WTC11 (cell line): ENCODE measurements at regions of chr12 and their contacts with region 1.

Region 1: GRCh38 chr12:54259194-54260011 is 20.5 kb downstream of the CBX5 start:
- DNase-seq: peak; percentile 91
- ATAC-seq: peak; percentile 94
- H3K4me3 Mint-ChIP-seq: peak overlapping the region; percentile 66
- H3K27ac Mint-ChIP-seq: peak overlapping the region; percentile 99
- H3K4me1 Mint-ChIP-seq: peaks cover 63% of the 10 kb centered on the region
- H3K27me3 Mint-ChIP-seq: no peaks in the 10 kb centered on the region
- CTCF ChIP-seq: no peak

Region 2: GRCh38 chr12:54195080-54195736 is 64.2 kb before region 1 on chr12:
- CTCF ChIA-PET with region 1: no interaction called
- POLR2A ChIA-PET with region 1: no interaction called
- DNase-seq: no peak
- ATAC-seq: no peak
- H3K4me3 Mint-ChIP-seq: no peak overlapping the region
- H3K27ac Mint-ChIP-seq: no peak overlapping the region
- H3K4me1 Mint-ChIP-seq: peaks cover 24% of the 10 kb centered on the region
- H3K27me3 Mint-ChIP-seq: peaks cover 98% of the 10 kb centered on the region
- CTCF ChIP-seq: no peak

Region 3: GRCh38 chr12:54279866-54280467 is 20.6 kb after region 1 on chr12 and contains the start of gene CBX5:
- CTCF ChIA-PET with region 1: interaction called, 19 read pairs
- POLR2A ChIA-PET with region 1: interaction called, 105 read pairs
- DNase-seq: peak; percentile 99
- ATAC-seq: peak; percentile 53
- H3K4me3 Mint-ChIP-seq: no peak within 1 kb of the TSS
- H3K27ac Mint-ChIP-seq: no peak within 1 kb of the TSS
- H3K4me1 Mint-ChIP-seq: peaks cover 58% of the 10 kb centered on the region
- H3K27me3 Mint-ChIP-seq: no peaks in the 10 kb centered on the region
- CTCF ChIP-seq: no peak
- total RNA-seq, gene CBX5: 182 to 218 TPM (median 216 TPM) in 3 replicates

Region 4: GRCh38 chr12:54285150-54286041 is 26.0 kb after region 1 on chr12:
- CTCF ChIA-PET with region 1: interaction called, 19 read pairs
- POLR2A ChIA-PET with region 1: interaction called, 105 read pairs
- DNase-seq: no peak
- ATAC-seq: no peak
- H3K4me3 Mint-ChIP-seq: peak overlapping the region; percentile 10
- H3K27ac Mint-ChIP-seq: peak overlapping the region; percentile 81
- H3K4me1 Mint-ChIP-seq: peaks cover 41% of the 10 kb centered on the region
- H3K27me3 Mint-ChIP-seq: no peaks in the 10 kb centered on the region
- CTCF ChIP-seq: no peak

Region 5: DNA sequence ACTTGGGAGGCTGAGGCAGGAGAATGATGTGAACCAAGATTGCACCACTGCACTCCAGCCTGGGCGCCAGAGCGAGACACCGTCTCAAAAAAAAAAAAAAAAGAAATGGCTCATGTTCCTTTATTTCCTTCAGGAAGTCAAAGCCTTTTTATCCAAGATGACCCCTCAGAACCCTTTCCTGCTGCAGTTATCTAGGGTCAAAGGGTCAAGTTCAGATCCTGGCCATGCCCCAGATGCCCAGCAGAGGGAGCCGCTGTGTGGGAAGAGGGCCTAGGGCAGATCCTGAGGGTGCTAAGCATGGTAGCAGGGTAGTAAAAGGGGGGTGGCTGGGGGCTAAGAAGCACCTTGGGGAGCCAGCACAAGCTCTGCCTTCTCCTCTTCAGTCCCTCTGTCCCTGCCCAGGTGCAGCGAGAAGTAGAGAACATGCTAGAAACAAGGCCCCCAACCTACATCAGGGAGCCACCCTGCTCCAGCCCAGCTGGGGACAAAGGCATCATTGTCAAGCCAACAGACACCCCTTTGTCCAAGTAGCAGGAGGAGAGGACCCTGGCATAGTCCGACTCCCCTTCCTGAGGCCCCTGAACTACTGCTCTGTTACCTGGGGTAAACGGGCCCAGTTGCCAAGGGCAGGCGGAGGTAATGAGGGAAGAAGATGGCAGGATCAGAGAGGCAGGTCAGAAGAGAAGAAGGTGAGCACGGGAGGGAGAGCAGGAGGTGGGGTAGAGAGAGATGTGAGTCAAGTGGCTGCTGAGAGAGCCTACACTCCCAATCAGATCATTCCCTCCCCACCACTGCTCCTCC is 34.9 kb after region 1 on chr12:
- CTCF ChIA-PET with region 1: interaction called, 5 read pairs
- POLR2A ChIA-PET with region 1: interaction called, 12 read pairs
- DNase-seq: peak; percentile 88
- ATAC-seq: peak; percentile 76
- H3K4me3 Mint-ChIP-seq: no peak overlapping the region
- H3K27ac Mint-ChIP-seq: no peak overlapping the region
- H3K4me1 Mint-ChIP-seq: peaks cover 4% of the 10 kb centered on the region
- H3K27me3 Mint-ChIP-seq: peaks cover 4% of the 10 kb centered on the region
- CTCF ChIP-seq: peak; percentile 77

Region 6: DNA sequence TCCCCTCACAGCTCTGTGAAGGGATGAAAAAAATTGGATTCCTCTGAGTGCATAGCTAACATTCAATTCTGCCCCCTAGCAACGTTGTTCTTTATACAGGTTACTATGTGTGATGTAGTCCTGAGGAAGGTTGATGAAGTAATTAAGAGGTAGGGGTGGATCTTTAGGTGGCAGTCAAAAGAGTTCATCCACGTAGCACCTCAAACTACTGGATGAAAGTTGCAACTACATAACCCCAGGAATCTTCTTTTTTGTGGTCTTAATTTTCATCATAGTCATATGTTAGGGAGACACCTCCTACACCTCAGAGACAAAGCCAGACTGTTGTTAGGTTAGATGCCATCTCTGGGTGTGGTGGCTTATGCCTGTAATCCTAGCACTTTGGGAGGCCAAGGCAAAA is 51.6 kb after region 1 on chr12:
- CTCF ChIA-PET with region 1: no interaction called
- POLR2A ChIA-PET with region 1: no interaction called
- DNase-seq: no peak
- ATAC-seq: no peak
- H3K4me3 Mint-ChIP-seq: no peak overlapping the region
- H3K27ac Mint-ChIP-seq: no peak overlapping the region
- H3K4me1 Mint-ChIP-seq: peaks cover 8% of the 10 kb centered on the region; the same call in 1 of the 2 replicates
- H3K27me3 Mint-ChIP-seq: no peaks in the 10 kb centered on the region; the same call in 1 of the 2 replicates
- CTCF ChIP-seq: no peak